Activated B cell treated with CpG ODN at 0.5 μM for 24 hours (primary cell): ENCODE measurements at regions of chr10 and their contacts with region 1.

Region 1: GRCh38 chr10:88386821-88387773 is 196.0 kb downstream of the RNLS start:
- DNase-seq: no peak
- ATAC-seq: peak; percentile 50
- H3K4me3 Mint-ChIP-seq: no peak overlapping the region
- H3K27ac Mint-ChIP-seq: no peak overlapping the region
- H3K4me1 Mint-ChIP-seq: peaks cover 32% of the 10 kb centered on the region
- H3K27me3 Mint-ChIP-seq: no peaks in the 10 kb centered on the region
- CTCF ChIP-seq: no peak

Region 2: GRCh38 chr10:86461963-86462804 is 1924.9 kb before region 1 on chr10:
- CTCF ChIA-PET with region 1: no interaction called
- POLR2A ChIA-PET with region 1: no interaction called
- intact Hi-C with region 1: no loop called
- DNase-seq: no peak
- ATAC-seq: no peak
- H3K4me3 Mint-ChIP-seq: no peak overlapping the region
- H3K27ac Mint-ChIP-seq: no peak overlapping the region
- H3K4me1 Mint-ChIP-seq: no peaks in the 10 kb centered on the region
- H3K27me3 Mint-ChIP-seq: no peaks in the 10 kb centered on the region
- CTCF ChIP-seq: no peak

Region 3: GRCh38 chr10:87817609-87818504 is 569.2 kb before region 1 on chr10 and contains the start of gene ATAD1:
- CTCF ChIA-PET with region 1: interaction called, 3 read pairs
- POLR2A ChIA-PET with region 1: no interaction called
- intact Hi-C with region 1: loop called (anchors 1 kb)
- DNase-seq: peak; percentile 85
- ATAC-seq: peak; percentile 84
- H3K4me3 Mint-ChIP-seq: peak within 1 kb of the TSS; percentile 98
- H3K27ac Mint-ChIP-seq: peak within 1 kb of the TSS; percentile 96
- H3K4me1 Mint-ChIP-seq: peaks cover 40% of the 10 kb centered on the region
- H3K27me3 Mint-ChIP-seq: no peaks in the 10 kb centered on the region
- CTCF ChIP-seq: no peak
- total RNA-seq, gene ATAD1: 34.7 and 42.6 TPM in 2 replicates

Region 4: DNA sequence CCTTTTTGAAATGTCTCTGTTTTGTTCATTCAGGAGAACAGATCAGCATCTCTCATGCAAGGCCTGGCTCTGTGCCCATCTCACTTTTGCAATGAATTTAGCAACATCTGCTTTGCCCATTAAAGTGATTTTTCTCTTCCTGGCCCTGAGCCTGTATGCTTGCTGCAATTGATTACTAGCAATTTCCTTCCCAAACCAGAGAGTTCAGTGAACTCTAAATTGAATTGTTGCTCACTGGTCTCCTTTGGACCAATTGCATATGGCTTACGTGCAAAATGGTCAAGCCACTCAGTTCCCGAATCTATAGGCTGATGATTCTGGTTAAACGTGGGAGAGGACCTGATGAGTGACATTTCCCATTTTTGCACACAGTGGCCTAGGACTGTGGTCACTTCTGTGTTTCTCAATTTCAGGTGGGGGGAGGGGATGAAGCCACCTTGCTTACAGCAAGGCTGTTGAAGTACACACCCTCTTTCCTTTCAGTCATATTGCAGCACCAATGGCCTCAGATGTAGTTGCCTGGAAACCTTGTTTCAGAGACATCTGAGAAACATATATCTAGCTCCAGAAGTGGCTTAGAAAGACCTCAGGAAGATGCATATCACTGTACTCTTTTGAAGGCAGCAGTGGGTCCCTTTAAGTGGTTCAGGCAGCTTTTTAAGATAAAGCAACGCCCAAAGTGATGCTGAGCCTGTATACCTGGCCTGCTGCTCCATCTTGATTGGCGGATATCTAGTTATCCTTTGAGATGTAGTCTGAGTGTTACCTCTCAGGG is 322.3 kb before region 1 on chr10:
- CTCF ChIA-PET with region 1: interaction called, 4 read pairs
- POLR2A ChIA-PET with region 1: interaction called, 10 read pairs
- intact Hi-C with region 1: loop called (anchors 2 kb)
- DNase-seq: no peak
- ATAC-seq: no peak
- H3K4me3 Mint-ChIP-seq: no peak overlapping the region
- H3K27ac Mint-ChIP-seq: no peak overlapping the region
- H3K4me1 Mint-ChIP-seq: peaks cover 95% of the 10 kb centered on the region
- H3K27me3 Mint-ChIP-seq: no peaks in the 10 kb centered on the region
- CTCF ChIP-seq: no peak

Region 5: GRCh38 chr10:88108115-88108610 is 278.9 kb before region 1 on chr10:
- CTCF ChIA-PET with region 1: interaction called, 47 read pairs
- POLR2A ChIA-PET with region 1: interaction called, 20 read pairs
- intact Hi-C with region 1: loop called (anchors 1 kb)
- DNase-seq: no peak
- ATAC-seq: peak; percentile 72
- H3K4me3 Mint-ChIP-seq: peak overlapping the region; percentile 55
- H3K27ac Mint-ChIP-seq: peak overlapping the region; percentile 95
- H3K4me1 Mint-ChIP-seq: peaks cover 58% of the 10 kb centered on the region
- H3K27me3 Mint-ChIP-seq: no peaks in the 10 kb centered on the region
- CTCF ChIP-seq: no peak

Region 6: GRCh38 chr10:88270871-88271713 is 116.0 kb before region 1 on chr10:
- CTCF ChIA-PET with region 1: interaction called, 26 read pairs
- POLR2A ChIA-PET with region 1: interaction called, 13 read pairs
- intact Hi-C with region 1: loop called (anchors 1 kb)
- DNase-seq: peak; percentile 16
- ATAC-seq: peak; percentile 93
- H3K4me3 Mint-ChIP-seq: peak overlapping the region; percentile 40
- H3K27ac Mint-ChIP-seq: peak overlapping the region; percentile 56
- H3K4me1 Mint-ChIP-seq: peaks cover 46% of the 10 kb centered on the region
- H3K27me3 Mint-ChIP-seq: no peaks in the 10 kb centered on the region
- CTCF ChIP-seq: no peak

Region 7: DNA sequence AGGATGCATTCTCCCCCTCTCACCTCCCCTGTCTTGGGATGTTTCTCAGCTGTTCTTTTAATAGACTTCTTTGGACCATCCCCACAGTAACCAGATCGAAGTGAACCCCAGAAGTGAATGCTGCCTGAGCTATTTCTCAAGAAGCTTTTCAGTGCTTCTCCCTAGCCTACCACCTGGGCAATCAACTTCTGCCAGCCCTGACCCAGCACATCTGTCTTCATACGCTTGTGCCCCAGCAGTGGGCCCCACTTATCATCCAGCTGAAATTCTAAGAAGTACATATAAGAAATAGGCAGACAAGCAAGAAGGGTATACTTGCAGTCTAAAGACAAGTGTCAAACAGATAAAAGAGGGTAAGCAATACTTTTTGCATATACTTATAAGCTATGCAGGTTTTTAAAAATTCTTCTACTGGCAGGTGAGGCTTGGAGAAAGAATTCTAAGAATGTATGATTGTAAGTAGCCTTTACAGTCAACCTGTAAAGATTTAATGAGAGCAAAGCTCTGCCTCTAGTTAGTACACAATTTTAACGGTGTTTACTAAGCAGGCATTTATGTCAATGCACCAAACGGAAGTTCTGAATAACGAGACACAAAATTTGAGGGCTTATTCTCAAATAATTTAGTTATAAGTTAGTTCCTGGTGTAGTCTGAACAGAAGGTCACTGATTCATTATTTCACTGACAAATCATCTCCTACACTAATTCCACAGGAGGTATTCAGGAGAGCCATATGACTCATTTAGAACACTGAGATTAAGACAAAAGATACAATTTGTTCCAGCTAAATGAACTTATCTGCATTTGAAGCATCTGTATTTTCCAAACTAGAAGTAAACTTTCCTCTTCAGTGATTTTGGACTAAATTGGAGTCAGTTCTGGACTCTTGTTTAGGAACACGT is 112.7 kb after region 1 on chr10:
- CTCF ChIA-PET with region 1: no interaction called
- POLR2A ChIA-PET with region 1: no interaction called
- intact Hi-C with region 1: no loop called
- DNase-seq: no peak
- ATAC-seq: no peak
- H3K4me3 Mint-ChIP-seq: no peak overlapping the region
- H3K27ac Mint-ChIP-seq: no peak overlapping the region
- H3K4me1 Mint-ChIP-seq: peaks cover 16% of the 10 kb centered on the region
- H3K27me3 Mint-ChIP-seq: no peaks in the 10 kb centered on the region
- CTCF ChIP-seq: no peak

Region 8: DNA sequence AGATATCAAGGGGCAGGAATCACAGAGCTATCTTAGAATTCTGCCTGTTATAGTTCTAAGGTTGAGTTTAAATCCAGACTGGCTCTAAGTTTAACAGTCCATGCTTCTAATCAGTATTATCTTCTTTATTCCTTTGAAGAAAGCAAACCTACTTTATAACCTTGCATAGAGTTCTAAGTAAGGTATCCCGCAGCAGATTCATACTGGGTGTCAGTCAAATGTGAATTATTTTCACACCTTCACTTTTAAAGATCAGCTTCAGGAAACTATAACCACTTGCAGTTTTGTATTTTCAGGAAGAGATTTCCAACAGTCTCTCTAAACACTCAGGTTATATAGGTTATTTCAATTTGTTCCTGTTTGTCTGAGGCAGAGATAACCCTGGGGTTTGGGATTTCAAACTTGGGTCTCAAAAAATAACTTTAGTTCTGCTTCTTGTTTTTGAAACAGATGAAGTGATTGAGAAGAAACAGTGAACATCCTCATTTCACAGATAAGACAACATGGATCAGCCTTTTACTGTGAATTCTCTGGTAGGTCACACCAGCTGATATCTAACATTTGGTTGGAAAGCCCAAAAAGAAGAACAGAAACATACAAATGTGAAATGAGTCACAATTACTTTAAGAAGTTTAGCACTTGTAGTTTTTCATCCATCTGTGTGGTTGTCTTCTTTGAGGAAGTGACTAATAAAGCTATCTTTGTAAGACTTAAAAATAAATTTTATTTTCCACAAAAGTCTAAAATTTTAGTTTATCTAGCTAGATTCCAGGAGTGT is 514.3 kb after region 1 on chr10:
- CTCF ChIA-PET with region 1: no interaction called
- POLR2A ChIA-PET with region 1: no interaction called
- intact Hi-C with region 1: loop called (anchors 10 kb)
- DNase-seq: no peak
- ATAC-seq: peak; percentile 83
- H3K4me3 Mint-ChIP-seq: peak overlapping the region; percentile 65
- H3K27ac Mint-ChIP-seq: peak overlapping the region; percentile 98
- H3K4me1 Mint-ChIP-seq: peaks cover 65% of the 10 kb centered on the region
- H3K27me3 Mint-ChIP-seq: no peaks in the 10 kb centered on the region
- CTCF ChIP-seq: no peak